Left colon (tissue), 2 donors: ENCODE measurements at regions of chr17 and their contacts with region 1.

Region 1: GRCh38 chr17:64648234-64648633 is 13.9 kb downstream of the SMURF2 start:
- DNase-seq: no peak
- ATAC-seq: no peak

Region 2: GRCh38 chr17:64534175-64534574 is 114.1 kb before region 1 on chr17:
- intact Hi-C with region 1: loop called in 1 of 2 experiments (anchors 10 kb)
- DNase-seq: peak in 1 of 2 donors; percentile 12
- ATAC-seq: peak; percentile 82